ENCODE measurements at regions of chr9 and their contacts with region 1.

Region 1: DNA sequence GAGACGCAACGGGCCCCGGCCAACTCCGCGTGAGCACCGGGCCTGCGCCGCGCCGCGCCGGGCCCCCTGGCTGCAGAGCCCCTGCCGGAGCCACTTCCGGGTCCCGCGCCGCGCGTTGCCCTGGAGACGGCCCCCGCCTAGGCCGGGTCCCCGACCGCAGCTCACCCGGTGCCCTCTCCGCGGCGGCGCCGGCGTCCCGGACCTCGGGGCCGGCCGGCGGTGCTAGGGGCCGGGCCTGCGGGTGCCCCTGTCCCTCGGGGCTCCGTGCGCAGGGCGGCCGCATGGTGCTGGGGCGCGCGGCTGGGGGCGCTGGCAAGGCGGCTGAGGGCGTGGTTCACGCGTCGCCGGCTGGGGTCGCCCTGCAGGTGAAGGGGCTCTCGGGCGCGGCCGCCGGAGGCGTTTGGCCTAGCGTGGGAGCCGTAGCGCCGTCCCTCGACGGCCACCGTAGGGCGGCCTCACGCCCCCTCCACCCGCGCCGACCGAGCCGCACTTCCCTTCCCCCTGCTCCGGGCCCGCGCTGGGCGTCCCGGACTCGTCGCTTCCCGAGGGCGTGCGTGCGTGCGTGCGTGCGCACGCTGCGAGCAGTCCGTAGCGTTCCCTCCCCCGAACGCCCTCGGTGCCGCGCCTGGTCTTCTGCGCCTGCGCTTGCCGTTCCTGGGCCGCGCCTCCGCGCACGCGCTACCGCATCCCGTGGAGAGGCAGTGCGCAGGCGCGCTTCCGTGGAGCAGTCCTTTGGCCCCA is at the start of gene TMEM250:
- DNase-seq: peak; percentile 97
- CTCF ChIP-seq: peak; percentile 34

Region 2: DNA sequence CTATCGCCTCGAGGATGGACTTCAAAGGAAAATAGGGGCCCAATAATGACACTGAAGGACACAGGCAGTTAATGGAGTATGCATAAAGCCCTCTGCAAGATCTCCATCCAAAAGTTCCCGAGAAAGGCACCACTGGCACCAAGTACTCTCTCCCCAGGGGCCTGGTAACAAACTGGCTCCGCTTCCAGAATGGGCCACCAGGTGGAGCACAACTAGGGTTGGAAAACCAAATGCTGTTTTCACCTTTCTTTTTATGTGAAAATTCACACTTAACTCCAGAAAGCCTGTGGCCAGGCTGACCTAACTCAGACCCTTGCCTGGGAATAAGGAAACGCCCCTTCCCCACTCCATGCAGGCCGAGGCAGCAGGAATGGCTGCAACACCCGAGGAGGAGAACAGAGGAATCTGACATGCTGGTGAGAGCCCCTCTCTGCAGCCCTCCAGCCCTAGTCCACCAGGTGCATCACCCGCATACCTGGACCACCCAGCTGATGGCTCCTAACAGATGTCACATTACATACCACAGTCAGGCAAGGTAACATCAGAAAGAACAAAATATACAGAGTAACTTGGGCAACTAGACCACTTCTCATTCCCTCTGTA is 253.9 kb before region 1 on chr9:
- CTCF ChIA-PET with region 1: interaction called, 22 read pairs
- POLR2A ChIA-PET with region 1: no interaction called
- DNase-seq: peak; percentile 77
- CTCF ChIP-seq: peak; percentile 73

Region 3: DNA sequence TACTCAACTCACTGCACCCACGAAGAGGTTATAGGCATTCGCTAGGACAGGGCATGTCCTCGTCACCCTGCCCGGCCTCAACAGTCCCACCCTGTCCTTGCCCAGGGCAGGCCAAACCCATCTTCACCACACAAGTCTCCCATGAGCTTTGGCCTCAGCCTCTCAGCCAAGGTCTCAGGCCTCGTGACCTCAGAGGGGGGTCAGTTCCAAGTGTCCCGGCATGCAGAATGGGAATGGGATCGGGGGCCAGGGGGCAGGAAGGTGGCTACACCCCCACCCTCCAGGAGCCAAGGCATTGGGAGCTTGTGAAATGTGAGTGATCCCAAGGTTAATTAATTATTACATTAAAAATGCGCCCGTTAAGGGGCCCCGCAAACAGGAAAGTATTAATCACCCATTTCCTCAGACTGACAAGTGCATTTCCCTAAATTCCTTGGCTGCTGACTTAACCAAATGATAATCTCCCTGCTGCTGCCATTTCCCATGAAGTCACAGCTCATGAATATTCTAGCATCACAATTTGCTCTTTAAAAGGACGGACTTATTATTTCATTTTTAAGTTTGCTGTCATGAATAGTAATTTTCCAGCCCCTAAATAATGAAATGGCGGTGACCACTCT is 149.3 kb before region 1 on chr9:
- CTCF ChIA-PET with region 1: interaction called, 56 read pairs
- POLR2A ChIA-PET with region 1: no interaction called
- DNase-seq: no peak
- CTCF ChIP-seq: no peak

Region 4: GRCh38 chr9:136052991-136053661 is 65.4 kb before region 1 on chr9:
- CTCF ChIA-PET with region 1: no interaction called
- POLR2A ChIA-PET with region 1: no interaction called
- DNase-seq: no peak
- CTCF ChIP-seq: no peak

Region 5: DNA sequence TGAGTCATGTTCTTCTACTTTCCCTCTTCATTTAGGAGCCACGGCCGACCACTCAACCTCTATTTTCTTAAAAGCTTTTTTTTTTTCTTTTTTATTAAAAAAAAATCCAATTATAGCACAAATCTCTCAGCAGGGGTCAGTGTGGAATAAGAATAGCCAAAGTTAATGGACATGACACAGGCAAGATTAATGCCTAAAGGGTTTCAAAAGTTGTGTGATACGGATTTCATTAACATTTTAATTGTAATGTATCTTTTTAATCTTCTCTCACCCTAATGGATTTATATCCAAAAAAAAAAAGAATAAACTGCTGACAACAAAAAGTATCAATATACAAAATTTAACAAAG is 28.8 kb before region 1 on chr9:
- CTCF ChIA-PET with region 1: interaction called, 53 read pairs
- POLR2A ChIA-PET with region 1: no interaction called
- DNase-seq: no peak
- CTCF ChIP-seq: peak; percentile 32

Region 6: DNA sequence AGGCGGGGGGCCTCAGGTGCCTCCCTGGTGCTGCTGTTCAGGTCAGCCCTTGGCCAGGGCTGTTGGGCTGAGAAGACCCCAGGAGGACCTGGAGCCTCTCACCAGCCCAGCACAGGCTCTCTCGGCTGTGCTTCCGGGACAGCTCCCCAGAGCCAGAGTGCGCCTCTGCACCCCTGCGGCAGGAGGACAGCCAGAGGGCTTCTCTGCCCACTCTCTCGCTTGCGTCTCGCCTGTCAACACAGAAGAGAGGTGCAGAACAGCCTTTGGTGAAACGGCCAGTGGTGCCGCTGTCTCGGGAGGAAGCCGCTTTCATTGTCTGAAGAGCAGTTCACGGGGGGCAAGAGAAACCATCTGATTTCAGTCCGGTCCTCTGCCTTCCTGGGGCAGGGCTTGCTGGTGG is 19.6 kb before region 1 on chr9:
- CTCF ChIA-PET with region 1: interaction called, 12 read pairs
- POLR2A ChIA-PET with region 1: no interaction called
- DNase-seq: no peak
- CTCF ChIP-seq: no peak